ENCODE measurements at regions of chr1 and their contacts with region 1.

Region 1: DNA sequence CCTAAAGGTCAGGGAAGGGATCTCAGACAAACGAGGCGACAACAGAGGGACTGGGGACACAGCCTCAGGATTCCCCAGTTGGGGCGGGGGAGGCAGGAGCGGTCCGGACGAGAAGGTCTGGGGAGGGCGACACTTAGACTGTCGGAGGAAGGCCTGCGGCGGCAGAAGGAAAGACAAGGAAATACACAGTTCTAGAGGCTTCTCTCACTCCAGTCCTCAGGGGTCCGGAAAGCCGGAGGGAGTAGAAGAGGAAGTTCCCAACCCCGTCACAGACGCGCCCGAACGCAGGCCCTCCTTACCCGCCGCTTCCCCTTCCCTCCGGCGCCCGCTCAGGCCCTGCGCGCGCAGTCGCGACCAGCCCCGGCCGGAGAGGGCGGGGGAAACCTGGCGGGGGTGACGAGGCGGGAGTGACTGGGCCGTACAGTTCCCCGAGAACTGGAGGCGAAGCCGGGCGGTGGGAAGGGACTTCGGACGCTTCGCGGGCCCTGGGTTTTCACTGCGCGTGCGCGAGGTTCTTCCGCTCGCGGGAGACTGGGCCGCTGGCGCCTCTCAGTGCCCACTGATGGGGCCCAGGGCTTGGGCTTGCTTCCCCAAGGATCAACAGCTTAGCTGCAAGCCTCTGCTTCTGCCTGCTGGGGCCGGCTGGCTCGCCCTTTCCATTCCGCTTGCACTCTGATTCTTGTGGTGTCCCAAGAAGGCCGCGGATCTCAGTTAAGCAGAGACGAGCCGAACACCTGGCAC is at the start of gene IPP:
- DNase-seq: peak; percentile 99
- ATAC-seq: peak; percentile 96
- H3K4me3 ChIP-seq: peak within 1 kb of the TSS; percentile 51
- H3K27ac ChIP-seq: peak within 1 kb of the TSS; percentile 92
- H3K4me1 ChIP-seq: peaks cover 35 to 43% of the 10 kb centered on the region in 2 experiments
- H3K27me3 ChIP-seq: no peaks in the 10 kb centered on the region
- CTCF ChIP-seq: peak; percentile 37 to 75 (median 71); a peak in 5 of 6 replicates
- EP300 ChIP-seq: peak; percentile 41; the same call in 1 of the 2 replicates
- POLR2A ChIP-seq: peak; percentile 99
- RAD21 ChIP-seq: peak; percentile 49 to 75
- polyA plus RNA-seq, gene IPP: 13.5 to 15.1 TPM

Region 2: DNA sequence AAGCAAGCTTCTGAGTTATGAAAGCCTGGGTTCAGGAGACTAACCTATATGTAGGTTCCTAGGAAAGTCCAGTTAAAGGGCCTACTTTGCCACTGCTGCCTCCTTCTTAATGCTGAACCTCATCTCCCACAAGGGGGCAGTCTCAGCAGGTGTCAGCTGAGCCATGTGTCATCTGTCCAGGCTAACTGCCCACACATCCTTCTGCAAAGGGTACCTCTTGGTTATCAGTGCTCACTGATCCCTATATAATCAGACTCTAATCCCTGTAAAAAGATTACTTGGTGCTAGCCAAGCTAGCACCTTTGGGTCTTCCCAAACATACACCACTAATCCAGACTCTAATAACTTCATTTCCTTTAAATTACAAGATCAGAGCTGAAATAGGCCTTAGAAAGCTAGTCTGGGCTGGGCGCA is 237.8 kb before region 1 on chr1:
- CTCF ChIA-PET with region 1: no interaction called
- POLR2A ChIA-PET with region 1: no interaction called
- in situ Hi-C with region 1: no loop called
- intact Hi-C with region 1: no loop called
- DNase-seq: peak; percentile 57 to 88 (median 67)
- ATAC-seq: peak; percentile 78
- H3K4me3 ChIP-seq: no peak overlapping the region
- H3K27ac ChIP-seq: no peak overlapping the region
- H3K4me1 ChIP-seq: no peaks in the 10 kb centered on the region; a peak in 1 of 5 replicates
- H3K27me3 ChIP-seq: no peaks in the 10 kb centered on the region
- CTCF ChIP-seq: peak; percentile 84 to 89 (median 86)
- EP300 ChIP-seq: no peak
- POLR2A ChIP-seq: no peak
- RAD21 ChIP-seq: peak; percentile 87 to 95

Region 3: GRCh38 chr1:45762291-45762690 is 11.8 kb after region 1 on chr1:
- CTCF ChIA-PET with region 1: no interaction called
- POLR2A ChIA-PET with region 1: interaction called, 16 read pairs
- in situ Hi-C with region 1: no loop called
- intact Hi-C with region 1: no loop called
- DNase-seq: no peak
- ATAC-seq: no peak
- H3K4me3 ChIP-seq: no peak overlapping the region
- H3K27ac ChIP-seq: no peak overlapping the region
- H3K4me1 ChIP-seq: peaks cover 0 to 3% of the 10 kb centered on the region in 2 experiments; a peak in 1 of 5 replicates
- H3K27me3 ChIP-seq: no peaks in the 10 kb centered on the region
- CTCF ChIP-seq: no peak
- EP300 ChIP-seq: no peak
- POLR2A ChIP-seq: no peak
- RAD21 ChIP-seq: no peak

Region 4: DNA sequence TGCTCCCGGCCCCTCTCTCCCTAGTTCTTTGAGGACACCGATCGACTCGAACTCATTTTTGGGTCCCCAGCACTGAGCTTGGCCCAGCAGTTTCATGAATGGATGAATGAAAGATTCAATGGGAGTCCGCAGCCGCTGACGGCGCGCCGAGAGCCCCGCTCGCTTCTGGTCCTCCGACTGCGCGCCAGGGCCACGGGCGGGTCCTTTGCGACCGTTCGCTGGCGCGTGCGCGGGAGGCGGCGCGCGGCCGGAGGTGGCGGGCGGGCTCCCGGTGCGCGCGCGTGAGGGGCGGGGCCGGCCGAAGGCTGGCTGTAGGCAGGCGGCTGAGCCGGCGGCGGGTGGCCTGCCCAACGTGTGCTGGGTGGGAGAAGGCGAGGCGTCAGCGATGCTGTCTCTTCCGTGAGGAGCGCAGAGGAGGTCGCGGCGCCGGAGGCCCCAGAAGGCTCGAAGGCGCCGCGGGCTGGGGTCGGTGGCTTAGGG is 52.9 kb after region 1 on chr1 and contains the start of gene MAST2:
- CTCF ChIA-PET with region 1: no interaction called
- POLR2A ChIA-PET with region 1: interaction called, 6 read pairs
- in situ Hi-C with region 1: no loop called
- intact Hi-C with region 1: loop called (anchors 5 kb)
- DNase-seq: peak; percentile 96 to 98 (median 98)
- ATAC-seq: peak; percentile 91
- H3K4me3 ChIP-seq: peak within 1 kb of the TSS; percentile 69
- H3K27ac ChIP-seq: peak within 1 kb of the TSS; percentile 77
- H3K4me1 ChIP-seq: peaks cover 19 to 23% of the 10 kb centered on the region in 2 experiments
- H3K27me3 ChIP-seq: no peaks in the 10 kb centered on the region
- CTCF ChIP-seq: peak in 1 of 3 experiments; percentile 3; a peak in 1 of 6 replicates
- EP300 ChIP-seq: no peak
- POLR2A ChIP-seq: peak; percentile 83
- RAD21 ChIP-seq: no peak
- polyA plus RNA-seq, gene MAST2: 0.73 to 1.1 TPM

Region 5: GRCh38 chr1:45843474-45843905 is 93.0 kb after region 1 on chr1:
- CTCF ChIA-PET with region 1: no interaction called
- POLR2A ChIA-PET with region 1: no interaction called
- in situ Hi-C with region 1: no loop called
- intact Hi-C with region 1: loop called (anchors 5 kb)
- DNase-seq: peak in 1 of 4 experiments; percentile 13
- ATAC-seq: peak; percentile 77
- H3K4me3 ChIP-seq: no peak overlapping the region
- H3K27ac ChIP-seq: no peak overlapping the region
- H3K4me1 ChIP-seq: peaks cover 0 to 3% of the 10 kb centered on the region in 2 experiments; a peak in 2 of 5 replicates
- H3K27me3 ChIP-seq: no peaks in the 10 kb centered on the region
- CTCF ChIP-seq: peak in 1 of 3 experiments; percentile 62; a peak in 3 of 6 replicates
- EP300 ChIP-seq: no peak
- POLR2A ChIP-seq: no peak
- RAD21 ChIP-seq: peak; percentile 72 to 74

Region 6: DNA sequence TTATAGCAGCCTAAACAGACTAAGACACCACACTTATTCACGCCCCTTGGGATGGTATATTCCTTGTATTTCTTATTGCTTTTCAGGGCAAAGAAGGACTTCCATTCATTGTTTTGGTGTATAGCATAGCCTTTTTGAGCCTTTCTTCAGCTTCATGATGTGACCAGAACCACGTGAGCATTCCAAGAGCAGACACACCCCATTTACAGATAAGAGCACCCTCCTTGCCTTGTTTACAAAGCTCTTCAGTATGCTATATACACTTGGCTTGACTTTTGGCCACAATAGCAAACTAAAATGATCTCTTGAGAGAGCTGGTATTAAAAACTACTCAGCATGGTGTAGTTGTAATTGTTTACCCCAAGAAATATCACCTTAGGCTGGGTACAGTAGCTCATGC is 303.3 kb after region 1 on chr1:
- CTCF ChIA-PET with region 1: no interaction called
- POLR2A ChIA-PET with region 1: no interaction called
- in situ Hi-C with region 1: no loop called
- intact Hi-C with region 1: no loop called
- DNase-seq: peak in 1 of 4 experiments; percentile 62
- ATAC-seq: peak; percentile 97
- H3K4me3 ChIP-seq: no peak overlapping the region
- H3K27ac ChIP-seq: no peak overlapping the region
- H3K4me1 ChIP-seq: peaks cover 0 to 10% of the 10 kb centered on the region in 2 experiments; a peak in 3 of 5 replicates
- H3K27me3 ChIP-seq: no peaks in the 10 kb centered on the region
- CTCF ChIP-seq: no peak; a peak in 1 of 6 replicates
- EP300 ChIP-seq: peak; percentile 14; the same call in 1 of the 2 replicates
- POLR2A ChIP-seq: no peak
- RAD21 ChIP-seq: no peak

Measured in K562 (cell line).